Heart left ventricle (tissue), 16 donors: ENCODE measurements at regions of chr12 and their contacts with region 1.

Region 1: GRCh38 chr12:92561543-92561899 is 141.3 kb upstream of the PLEKHG7 start:
- DNase-seq: peak in 4 of 5 donors; percentile 50 to 73 (median 62)
- ATAC-seq: peak; percentile 86 to 93 (median 90)
- H3K4me3 ChIP-seq: no peak overlapping the region
- H3K27ac ChIP-seq: peak overlapping the region in 11 of 12 donors; percentile 36 to 77 (median 54)
- H3K4me1 ChIP-seq: peaks cover 5 to 37% (median 18%) of the 10 kb centered on the region in 12 donors
- H3K27me3 ChIP-seq: no peaks in the 10 kb centered on the region
- CTCF ChIP-seq: no peak
- POLR2A ChIP-seq: no peak

Region 2: DNA sequence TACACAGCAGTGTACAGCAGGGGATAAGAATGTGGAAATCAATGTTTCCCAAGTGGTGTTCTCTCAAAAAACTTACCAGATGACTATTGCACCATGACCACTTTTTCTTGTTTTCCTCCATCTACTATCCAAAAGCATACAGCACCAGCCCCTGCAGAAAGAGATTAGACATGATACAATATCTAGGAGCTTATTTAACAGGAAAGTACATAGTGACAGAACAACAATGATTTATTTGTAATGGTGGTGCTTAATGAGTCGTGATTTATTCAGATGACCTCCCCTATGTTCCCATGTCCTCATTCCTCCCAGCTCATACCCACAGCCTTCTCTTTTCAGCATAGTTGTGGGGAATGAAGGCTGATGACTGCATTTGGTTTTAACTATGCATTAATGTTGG is 829.4 kb before region 1 on chr12:
- intact Hi-C with region 1: no loop called
- DNase-seq: no peak
- ATAC-seq: no peak
- H3K4me3 ChIP-seq: no peak overlapping the region
- H3K27ac ChIP-seq: no peak overlapping the region
- H3K4me1 ChIP-seq: no peaks in the 10 kb centered on the region
- H3K27me3 ChIP-seq: no peaks in the 10 kb centered on the region
- CTCF ChIP-seq: no peak
- POLR2A ChIP-seq: no peak

Region 3: DNA sequence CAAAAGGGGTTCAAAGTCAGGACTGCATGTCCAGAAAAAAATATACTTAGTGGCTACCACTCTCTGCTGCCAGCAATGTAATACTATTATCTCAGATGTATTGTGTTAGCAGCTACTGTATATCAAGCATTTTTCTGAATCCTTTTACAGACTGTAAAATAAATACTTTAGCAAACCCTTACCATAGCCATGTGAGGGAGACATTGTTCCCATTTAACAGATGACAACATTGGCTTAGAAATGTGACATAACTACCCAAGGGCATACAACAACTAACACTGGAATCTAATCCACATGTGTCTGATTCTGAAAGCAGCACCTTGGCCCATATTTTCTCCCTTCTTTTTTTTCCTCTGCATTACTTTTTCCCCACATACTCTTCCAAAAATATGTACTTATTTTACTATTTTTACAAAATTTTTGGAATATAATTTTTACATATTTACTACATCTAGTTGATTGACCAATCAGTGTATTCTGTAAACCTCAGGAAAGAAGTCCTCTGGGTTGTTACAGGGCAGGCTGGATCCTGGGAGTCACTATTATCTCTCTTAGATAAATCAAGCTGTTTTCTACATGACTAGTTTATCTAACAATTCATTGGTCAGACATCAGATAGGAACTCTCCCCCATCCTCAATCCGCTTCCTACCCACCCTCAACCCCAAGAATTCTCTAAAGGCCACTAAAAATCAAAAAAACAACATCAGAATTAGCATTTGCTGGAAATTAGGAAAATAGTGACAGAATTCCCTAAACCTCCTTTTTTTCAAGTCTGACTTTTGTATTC is 569.9 kb before region 1 on chr12:
- intact Hi-C with region 1: loop called in 2 of 10 experiments (anchors 10 kb)
- DNase-seq: no peak
- ATAC-seq: no peak
- H3K4me3 ChIP-seq: no peak overlapping the region
- H3K27ac ChIP-seq: peak overlapping the region in 3 of 12 donors; percentile 0 to 39 (median 0)
- H3K4me1 ChIP-seq: peaks cover 0 to 37% (median 12%) of the 10 kb centered on the region in 12 donors
- H3K27me3 ChIP-seq: no peaks in the 10 kb centered on the region
- CTCF ChIP-seq: no peak
- POLR2A ChIP-seq: no peak

Region 4: DNA sequence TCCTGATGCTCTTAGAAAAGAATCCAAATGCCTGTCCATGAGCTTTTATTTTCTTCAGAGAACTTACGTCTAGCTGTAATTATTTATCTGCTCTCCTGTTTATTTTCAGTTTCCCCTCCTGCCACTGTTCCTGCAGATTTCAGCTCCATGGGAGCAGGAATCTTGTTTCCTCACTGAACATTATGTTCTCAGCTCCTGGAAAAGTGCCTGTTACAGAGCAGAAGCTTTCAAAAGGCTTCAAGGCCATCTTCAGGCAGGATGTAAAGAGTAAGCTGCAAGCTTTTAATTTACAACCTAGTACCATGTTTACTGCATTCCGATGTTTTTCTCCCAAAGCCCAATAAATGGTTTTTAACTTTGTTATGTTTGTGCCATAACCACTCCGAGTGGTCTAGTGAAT is 317.5 kb before region 1 on chr12:
- intact Hi-C with region 1: loop called in 2 of 10 experiments (anchors 10 kb)
- DNase-seq: peak in 2 of 5 donors; percentile 32 to 61
- ATAC-seq: peak; percentile 95 to 98 (median 96)
- H3K4me3 ChIP-seq: peak overlapping the region in 1 of 12 donors; percentile 23
- H3K27ac ChIP-seq: peak overlapping the region; percentile 48 to 78 (median 68)
- H3K4me1 ChIP-seq: peaks cover 5 to 25% (median 15%) of the 10 kb centered on the region in 12 donors
- H3K27me3 ChIP-seq: no peaks in the 10 kb centered on the region
- CTCF ChIP-seq: peak in 8 of 12 donors; percentile 22 to 54 (median 32)
- POLR2A ChIP-seq: no peak

Region 5: DNA sequence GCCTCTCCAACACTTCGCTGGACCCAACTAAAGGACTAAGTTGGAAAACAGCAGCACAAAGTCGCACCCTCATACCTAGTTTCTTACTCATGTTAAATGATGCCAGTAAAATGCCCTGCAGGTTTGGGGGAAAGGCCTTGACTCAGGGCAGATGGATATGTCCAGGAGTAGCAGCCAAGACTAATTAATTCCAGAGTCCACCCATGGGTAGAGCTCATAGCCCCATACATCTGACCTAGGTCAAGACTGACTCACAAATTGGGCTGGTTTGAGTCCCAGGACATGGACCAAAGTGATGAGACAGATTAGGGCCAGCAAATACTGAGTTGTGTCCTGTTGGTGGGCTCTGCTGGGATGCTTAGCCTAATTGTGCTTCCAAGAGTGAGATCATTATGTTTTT is 191.9 kb before region 1 on chr12:
- intact Hi-C with region 1: no loop called
- DNase-seq: no peak
- ATAC-seq: peak in 2 of 4 donors; percentile 41 to 51
- H3K4me3 ChIP-seq: no peak overlapping the region
- H3K27ac ChIP-seq: no peak overlapping the region
- H3K4me1 ChIP-seq: peaks cover 0 to 5% (median 0%) of the 10 kb centered on the region in 12 donors
- H3K27me3 ChIP-seq: no peaks in the 10 kb centered on the region
- CTCF ChIP-seq: no peak
- POLR2A ChIP-seq: no peak

Region 6: GRCh38 chr12:92445253-92446082 is 116.1 kb before region 1 on chr12:
- intact Hi-C with region 1: loop called in 2 of 10 experiments (anchors 10 kb)
- DNase-seq: peak in 4 of 5 donors; percentile 34 to 57 (median 52)
- ATAC-seq: peak; percentile 80 to 94 (median 84)
- H3K4me3 ChIP-seq: no peak overlapping the region
- H3K27ac ChIP-seq: peak overlapping the region; percentile 53 to 89 (median 76)
- H3K4me1 ChIP-seq: peaks cover 0 to 44% (median 25%) of the 10 kb centered on the region in 12 donors
- H3K27me3 ChIP-seq: no peaks in the 10 kb centered on the region
- CTCF ChIP-seq: no peak
- POLR2A ChIP-seq: no peak